ENCODE measurements at regions of chr6 and their contacts with region 1.

Region 1: DNA sequence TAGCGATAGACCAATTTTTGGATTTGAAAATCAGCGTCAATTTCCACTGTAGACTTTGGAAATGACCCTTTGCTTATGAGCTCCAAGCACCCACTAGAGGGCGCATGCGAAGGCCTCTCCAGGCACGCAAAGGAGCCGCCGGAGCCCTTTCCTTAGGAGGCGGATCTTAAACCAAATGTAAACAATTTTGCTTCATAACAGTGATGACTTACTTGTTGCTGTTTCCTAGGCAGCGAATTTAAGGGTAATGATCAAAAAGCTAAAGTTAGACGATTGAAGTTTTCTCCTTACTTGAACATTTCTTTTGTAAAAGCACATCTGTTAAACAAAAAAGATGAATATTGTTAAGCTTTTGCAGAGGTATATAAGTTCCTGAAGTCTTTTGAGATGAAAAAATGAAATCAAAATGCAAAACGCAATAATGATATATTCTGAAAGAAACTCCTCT is 29.2 kb upstream of the EXOC2 start:
- DNase-seq: peak; percentile 84 to 88 (median 86)
- ATAC-seq: peak; percentile 99
- H3K4me3 ChIP-seq: no peak overlapping the region
- H3K27ac ChIP-seq: no peak overlapping the region
- H3K4me1 ChIP-seq: no peaks in the 10 kb centered on the region
- H3K27me3 ChIP-seq: peaks cover 18 to 43% of the 10 kb centered on the region in 2 experiments
- CTCF ChIP-seq: peak; percentile 92 to 94 (median 93)
- EP300 ChIP-seq: no peak
- POLR2A ChIP-seq: no peak
- RAD21 ChIP-seq: peak; percentile 68 to 75

Region 2: DNA sequence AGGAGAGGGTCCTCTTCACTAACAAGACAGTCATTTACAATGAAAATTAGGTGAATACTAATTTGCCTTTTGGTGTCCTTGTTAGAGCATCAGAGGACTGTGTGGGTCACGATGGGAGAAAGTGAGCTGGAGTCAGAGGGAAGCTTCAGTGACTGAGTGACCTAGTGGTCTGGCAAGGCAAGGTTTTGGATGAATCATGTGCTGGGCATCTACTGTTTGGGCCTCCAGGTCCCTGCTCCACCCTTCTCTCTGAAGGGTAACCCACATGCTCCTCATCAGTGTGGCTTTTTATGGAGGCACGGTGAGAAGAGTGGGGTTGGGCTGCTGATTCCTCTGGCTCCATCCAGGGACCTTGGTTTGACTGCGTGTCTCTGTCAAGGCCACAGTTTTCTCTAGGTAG is 31.4 kb after region 1 on chr6:
- CTCF ChIA-PET with region 1: no interaction called
- POLR2A ChIA-PET with region 1: no interaction called
- in situ Hi-C with region 1: no loop called
- intact Hi-C with region 1: no loop called
- DNase-seq: no peak
- ATAC-seq: no peak
- H3K4me3 ChIP-seq: no peak overlapping the region
- H3K27ac ChIP-seq: no peak overlapping the region
- H3K4me1 ChIP-seq: no peaks in the 10 kb centered on the region
- H3K27me3 ChIP-seq: peaks cover 6 to 13% of the 10 kb centered on the region in 2 experiments; a peak in 4 of 5 replicates
- CTCF ChIP-seq: no peak
- EP300 ChIP-seq: no peak
- POLR2A ChIP-seq: no peak
- RAD21 ChIP-seq: no peak

Region 3: GRCh38 chr6:786946-787763 is 65.1 kb after region 1 on chr6:
- CTCF ChIA-PET with region 1: no interaction called
- POLR2A ChIA-PET with region 1: no interaction called
- in situ Hi-C with region 1: no loop called
- intact Hi-C with region 1: loop called (anchors 1 kb)
- DNase-seq: peak; percentile 59 to 64 (median 62)
- ATAC-seq: peak; percentile 91
- H3K4me3 ChIP-seq: no peak overlapping the region
- H3K27ac ChIP-seq: no peak overlapping the region
- H3K4me1 ChIP-seq: peaks cover 0 to 1% of the 10 kb centered on the region in 2 experiments; a peak in 2 of 5 replicates
- H3K27me3 ChIP-seq: peaks cover 12 to 29% of the 10 kb centered on the region in 2 experiments; a peak in 4 of 5 replicates
- CTCF ChIP-seq: peak; percentile 80 to 82 (median 80)
- EP300 ChIP-seq: no peak
- POLR2A ChIP-seq: no peak
- RAD21 ChIP-seq: peak; percentile 54 to 77

Region 4: DNA sequence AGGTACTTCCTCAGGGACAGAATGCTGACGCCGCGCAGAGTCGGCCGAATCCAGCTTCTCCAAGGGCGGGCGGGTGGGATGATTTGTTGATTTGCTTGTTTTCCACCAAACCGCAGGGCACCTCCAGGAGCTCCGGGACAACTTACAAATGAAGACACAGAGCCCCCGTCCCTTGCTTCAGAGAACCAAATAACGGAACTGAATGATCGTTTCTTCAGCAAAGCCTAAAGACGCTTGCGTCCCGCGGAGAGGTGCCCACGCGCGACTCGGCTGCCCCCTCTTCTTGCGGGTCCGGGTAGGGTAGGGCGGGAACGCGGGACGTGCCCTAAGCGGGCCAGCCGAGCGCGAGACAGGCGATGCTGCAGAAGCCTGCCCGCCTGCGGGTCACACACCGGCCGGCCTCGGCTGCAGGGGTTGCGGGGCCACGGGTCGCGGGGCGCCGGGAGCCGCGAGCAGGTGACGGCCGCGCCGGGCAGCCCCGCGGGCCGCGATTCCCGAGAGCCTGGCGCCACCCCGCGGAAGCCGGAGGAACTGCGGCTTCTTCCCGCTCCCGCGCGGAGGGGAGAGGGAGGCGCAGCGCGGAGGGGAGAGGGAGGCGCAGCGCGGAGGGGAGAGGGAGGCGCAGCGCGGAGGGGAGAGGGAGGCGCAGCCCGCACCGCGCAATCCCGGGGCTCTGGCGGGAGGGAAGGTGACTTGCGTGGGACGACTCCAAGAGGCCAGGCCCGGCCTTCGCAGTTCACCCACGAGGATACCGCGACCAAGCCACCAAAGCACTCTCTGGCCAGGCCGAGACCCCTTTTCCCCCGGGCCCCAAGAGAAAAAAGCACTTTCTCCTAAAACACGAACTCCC is 659.6 kb after region 1 on chr6:
- CTCF ChIA-PET with region 1: no interaction called
- POLR2A ChIA-PET with region 1: no interaction called
- in situ Hi-C with region 1: no loop called
- intact Hi-C with region 1: loop called (anchors 10 kb)
- DNase-seq: peak; percentile 58 to 84 (median 80)
- ATAC-seq: peak; percentile 95
- H3K4me3 ChIP-seq: no peak overlapping the region
- H3K27ac ChIP-seq: no peak overlapping the region
- H3K4me1 ChIP-seq: peaks cover 0 to 37% of the 10 kb centered on the region in 2 experiments; a peak in 2 of 5 replicates
- H3K27me3 ChIP-seq: peaks cover 55 to 94% of the 10 kb centered on the region in 2 experiments
- CTCF ChIP-seq: peak; percentile 64 to 86 (median 71)
- EP300 ChIP-seq: no peak
- POLR2A ChIP-seq: no peak
- RAD21 ChIP-seq: peak; percentile 84 to 88

Measured in K562 (cell line).